T-cell (primary cell): ENCODE measurements at regions of chr11 and their contacts with region 1.

Region 1: GRCh38 chr11:10933455-10934292 is 75.8 kb upstream of the ZBED5 start:
- DNase-seq: peak; percentile 48 to 89 (median 74)
- ATAC-seq: peak; percentile 81 to 89 (median 84)
- H3K4me3 ChIP-seq: peak overlapping the region; percentile 42 to 83
- H3K4me3 Mint-ChIP-seq: peak overlapping the region; percentile 80 to 88 (median 87)
- H3K27ac ChIP-seq: no peak overlapping the region
- H3K27ac Mint-ChIP-seq: peak overlapping the region; percentile 49 to 50
- H3K4me1 ChIP-seq: peaks cover 4 to 22% of the 10 kb centered on the region in 2 experiments
- H3K4me1 Mint-ChIP-seq: peaks cover 21 to 29% (median 22%) of the 10 kb centered on the region in 3 donors
- H3K27me3 ChIP-seq: peaks cover 4 to 43% of the 10 kb centered on the region in 2 experiments
- H3K27me3 Mint-ChIP-seq: peaks cover 27 to 28% of the 10 kb centered on the region in 2 donors

Region 2: GRCh38 chr11:10272132-10272531 is 661.5 kb before region 1 on chr11:
- CTCF ChIA-PET with region 1: no interaction called
- POLR2A ChIA-PET with region 1: no interaction called
- DNase-seq: no peak
- ATAC-seq: peak in 2 of 4 experiments; percentile 40 to 57
- H3K4me3 ChIP-seq: no peak overlapping the region
- H3K4me3 Mint-ChIP-seq: no peak overlapping the region
- H3K27ac ChIP-seq: no peak overlapping the region
- H3K27ac Mint-ChIP-seq: no peak overlapping the region
- H3K4me1 ChIP-seq: no peaks in the 10 kb centered on the region
- H3K4me1 Mint-ChIP-seq: peaks cover 7 to 24% (median 11%) of the 10 kb centered on the region in 3 donors
- H3K27me3 ChIP-seq: no peaks in the 10 kb centered on the region
- H3K27me3 Mint-ChIP-seq: no peaks in the 10 kb centered on the region

Region 3: DNA sequence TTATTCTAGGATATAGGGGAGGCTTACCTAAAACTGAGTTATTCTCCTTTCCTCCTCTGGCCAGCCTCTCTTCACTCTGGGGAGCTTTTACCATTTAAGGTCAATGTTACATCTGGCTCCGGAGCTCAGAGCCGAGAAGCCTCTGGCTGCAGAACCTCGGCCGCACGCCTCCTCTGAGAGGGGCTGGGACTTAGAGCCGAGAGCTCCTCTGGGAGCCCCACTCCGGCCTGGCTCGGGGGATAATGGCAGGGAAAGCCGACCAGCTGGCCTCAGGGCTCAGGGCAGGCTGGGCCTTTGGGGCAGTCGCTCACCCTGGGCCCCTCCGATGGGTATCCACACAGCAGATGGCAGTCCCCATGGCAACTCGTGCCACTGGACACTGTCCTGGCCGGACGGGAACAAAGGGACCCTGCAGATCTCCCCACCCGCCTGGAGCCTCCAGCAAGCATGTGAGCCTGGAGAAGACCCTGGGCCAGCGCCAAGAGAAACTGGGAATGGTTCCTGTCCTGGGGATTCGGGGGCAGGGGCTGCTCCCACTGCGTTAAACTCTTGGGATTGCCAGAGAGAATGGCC is 240.1 kb before region 1 on chr11 and contains the start of gene IRAG1:
- CTCF ChIA-PET with region 1: no interaction called
- POLR2A ChIA-PET with region 1: no interaction called
- DNase-seq: no peak
- ATAC-seq: peak in 1 of 4 experiments; percentile 9
- H3K4me3 ChIP-seq: no peak within 1 kb of the TSS
- H3K4me3 Mint-ChIP-seq: no peak within 1 kb of the TSS
- H3K27ac ChIP-seq: no peak within 1 kb of the TSS
- H3K27ac Mint-ChIP-seq: no peak within 1 kb of the TSS
- H3K4me1 ChIP-seq: no peaks in the 10 kb centered on the region
- H3K4me1 Mint-ChIP-seq: no peaks in the 10 kb centered on the region
- H3K27me3 ChIP-seq: peaks cover 0 to 48% of the 10 kb centered on the region in 2 experiments
- H3K27me3 Mint-ChIP-seq: peaks cover 6 to 21% of the 10 kb centered on the region in 2 donors
- total RNA-seq, gene IRAG1: 0.06 to 0.20 TPM in 2 of 5 donors, not detected in the others

Region 4: GRCh38 chr11:10906513-10906912 is 27.2 kb before region 1 on chr11:
- CTCF ChIA-PET with region 1: no interaction called
- POLR2A ChIA-PET with region 1: no interaction called
- DNase-seq: no peak
- ATAC-seq: no peak
- H3K4me3 ChIP-seq: no peak overlapping the region
- H3K4me3 Mint-ChIP-seq: no peak overlapping the region
- H3K27ac ChIP-seq: no peak overlapping the region
- H3K27ac Mint-ChIP-seq: no peak overlapping the region
- H3K4me1 ChIP-seq: no peaks in the 10 kb centered on the region
- H3K4me1 Mint-ChIP-seq: no peaks in the 10 kb centered on the region
- H3K27me3 ChIP-seq: peaks cover 0 to 7% of the 10 kb centered on the region in 2 experiments
- H3K27me3 Mint-ChIP-seq: peaks cover 8 to 14% of the 10 kb centered on the region in 2 donors

Region 5: GRCh38 chr11:11022125-11022730 is 88.6 kb after region 1 on chr11:
- CTCF ChIA-PET with region 1: interaction called, 15 to 17 read pairs
- POLR2A ChIA-PET with region 1: no interaction called
- DNase-seq: peak in 6 of 35 experiments; percentile 5 to 62 (median 10)
- ATAC-seq: peak in 1 of 4 experiments; percentile 55
- H3K4me3 ChIP-seq: no peak overlapping the region
- H3K4me3 Mint-ChIP-seq: no peak overlapping the region
- H3K27ac ChIP-seq: no peak overlapping the region
- H3K27ac Mint-ChIP-seq: no peak overlapping the region
- H3K4me1 ChIP-seq: no peaks in the 10 kb centered on the region
- H3K4me1 Mint-ChIP-seq: no peaks in the 10 kb centered on the region
- H3K27me3 ChIP-seq: no peaks in the 10 kb centered on the region
- H3K27me3 Mint-ChIP-seq: peaks cover 0 to 4% of the 10 kb centered on the region in 2 donors

Region 6: GRCh38 chr11:11787305-11788062 is 853.8 kb after region 1 on chr11:
- CTCF ChIA-PET with region 1: interaction called in 1 of 2 experiments, 12 read pairs
- POLR2A ChIA-PET with region 1: no interaction called
- DNase-seq: peak; percentile 32 to 81 (median 63)
- ATAC-seq: peak; percentile 70 to 85 (median 78)
- H3K4me3 ChIP-seq: no peak overlapping the region
- H3K4me3 Mint-ChIP-seq: no peak overlapping the region
- H3K27ac ChIP-seq: no peak overlapping the region
- H3K27ac Mint-ChIP-seq: no peak overlapping the region
- H3K4me1 ChIP-seq: no peaks in the 10 kb centered on the region
- H3K4me1 Mint-ChIP-seq: no peaks in the 10 kb centered on the region
- H3K27me3 ChIP-seq: peaks cover 0 to 9% of the 10 kb centered on the region in 2 experiments
- H3K27me3 Mint-ChIP-seq: peaks cover 6 to 7% of the 10 kb centered on the region in 2 donors